B cell (primary cell): ENCODE measurements at regions of chr1 and their contacts with region 1.

Region 1: DNA sequence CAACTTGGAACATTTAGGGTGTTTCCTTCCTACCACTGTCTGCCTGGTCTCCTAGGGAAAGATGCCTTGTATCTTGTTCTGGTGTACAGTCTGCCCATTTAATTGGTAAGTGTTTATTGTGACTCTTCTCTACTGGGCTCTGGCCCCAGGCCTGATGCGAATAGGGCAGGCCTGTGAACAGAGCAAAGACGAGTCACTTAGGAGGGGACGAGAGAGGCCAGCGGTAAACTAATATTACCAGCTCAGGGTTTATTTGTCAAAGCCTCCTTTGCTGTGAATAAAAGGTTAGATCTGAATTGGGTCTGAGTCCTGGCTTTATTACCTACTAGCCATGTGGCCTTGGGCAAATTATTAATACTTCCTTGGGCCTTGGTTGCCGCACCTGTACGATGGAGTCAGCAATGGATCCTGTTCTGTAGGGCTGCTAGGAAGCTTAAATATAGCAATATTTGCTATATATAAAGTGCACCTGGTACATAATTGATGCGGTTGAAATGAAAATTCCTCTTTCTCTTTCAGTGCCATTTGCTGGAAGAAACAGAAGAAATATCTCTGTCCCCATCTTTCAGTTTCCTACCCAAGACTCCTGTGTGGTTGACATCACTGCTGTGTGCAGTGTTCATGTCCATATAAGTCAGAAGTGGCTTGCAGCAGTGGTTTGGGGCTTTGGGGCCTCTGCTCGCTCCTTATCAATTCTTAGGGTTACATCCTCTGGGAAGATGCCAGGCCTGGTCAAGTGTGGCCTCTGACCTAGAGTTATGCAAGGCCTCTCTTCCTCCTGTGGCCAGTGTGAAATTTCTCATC is 32.4 kb downstream of the MAPKAPK2 start:
- DNase-seq: peak; percentile 49
- ATAC-seq: no peak
- H3K4me3 ChIP-seq: no peak overlapping the region
- H3K4me3 Mint-ChIP-seq: peak overlapping the region; percentile 24
- H3K27ac ChIP-seq: peak overlapping the region; percentile 35 to 75
- H3K27ac Mint-ChIP-seq: peak overlapping the region; percentile 81
- H3K4me1 ChIP-seq: peaks cover 70 to 77% of the 10 kb centered on the region in 2 donors
- H3K4me1 Mint-ChIP-seq: peaks cover 81% of the 10 kb centered on the region
- H3K27me3 ChIP-seq: no peaks in the 10 kb centered on the region
- H3K27me3 Mint-ChIP-seq: no peaks in the 10 kb centered on the region
- CTCF ChIP-seq: no peak

Region 2: GRCh38 chr1:206658264-206658980 is 58.6 kb before region 1 on chr1:
- CTCF ChIA-PET with region 1: interaction called, 145 read pairs
- POLR2A ChIA-PET with region 1: no interaction called
- intact Hi-C with region 1: no loop called
- DNase-seq: peak; percentile 72
- ATAC-seq: peak; percentile 85
- H3K4me3 ChIP-seq: peak overlapping the region in 3 of 5 experiments; percentile 8 to 51 (median 12)
- H3K4me3 Mint-ChIP-seq: peak overlapping the region; percentile 49
- H3K27ac ChIP-seq: no peak overlapping the region
- H3K27ac Mint-ChIP-seq: peak overlapping the region; percentile 1
- H3K4me1 ChIP-seq: peaks cover 16 to 17% of the 10 kb centered on the region in 2 donors
- H3K4me1 Mint-ChIP-seq: peaks cover 21% of the 10 kb centered on the region
- H3K27me3 ChIP-seq: peaks cover 0 to 34% (median 11%) of the 10 kb centered on the region in 4 experiments
- H3K27me3 Mint-ChIP-seq: peaks cover 30% of the 10 kb centered on the region
- CTCF ChIP-seq: peak; percentile 96

Region 3: DNA sequence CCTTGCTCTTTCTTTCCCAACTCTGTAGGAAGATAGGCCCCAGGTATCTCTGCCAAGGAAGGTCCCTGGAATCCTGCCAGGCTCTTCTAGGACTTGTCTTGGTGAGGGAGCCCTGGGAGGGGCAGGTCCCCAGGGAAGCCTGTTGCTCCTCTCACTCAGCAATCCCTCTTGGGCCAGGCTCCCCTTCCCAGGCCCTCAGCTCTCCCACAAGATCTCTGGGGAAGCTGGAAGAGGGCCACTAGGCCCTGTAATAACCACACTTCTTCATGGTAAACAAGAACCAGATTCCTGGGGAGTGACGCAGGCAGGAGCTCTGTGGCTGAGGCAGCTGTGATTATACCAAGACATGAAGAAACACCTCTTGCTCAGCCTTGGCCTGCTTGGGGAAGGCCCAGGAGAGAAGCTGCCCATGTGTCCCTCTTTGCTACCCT is 42.3 kb before region 1 on chr1:
- CTCF ChIA-PET with region 1: interaction called, 4 read pairs
- POLR2A ChIA-PET with region 1: interaction called, 6 read pairs
- intact Hi-C with region 1: loop called (anchors 5 kb)
- DNase-seq: no peak
- ATAC-seq: no peak
- H3K4me3 ChIP-seq: no peak overlapping the region
- H3K4me3 Mint-ChIP-seq: no peak overlapping the region
- H3K27ac ChIP-seq: no peak overlapping the region
- H3K27ac Mint-ChIP-seq: peak overlapping the region; percentile 21
- H3K4me1 ChIP-seq: peaks cover 40 to 53% of the 10 kb centered on the region in 2 donors
- H3K4me1 Mint-ChIP-seq: peaks cover 31% of the 10 kb centered on the region
- H3K27me3 ChIP-seq: peaks cover 0 to 32% (median 6%) of the 10 kb centered on the region in 4 experiments
- H3K27me3 Mint-ChIP-seq: peaks cover 11% of the 10 kb centered on the region
- CTCF ChIP-seq: no peak

Region 4: GRCh38 chr1:206706298-206706791 is 10.7 kb before region 1 on chr1:
- CTCF ChIA-PET with region 1: interaction called, 7 read pairs
- POLR2A ChIA-PET with region 1: interaction called, 6 read pairs
- intact Hi-C with region 1: loop called (anchors 1 kb)
- DNase-seq: no peak
- ATAC-seq: no peak
- H3K4me3 ChIP-seq: no peak overlapping the region
- H3K4me3 Mint-ChIP-seq: peak overlapping the region; percentile 29
- H3K27ac ChIP-seq: no peak overlapping the region
- H3K27ac Mint-ChIP-seq: peak overlapping the region; percentile 57
- H3K4me1 ChIP-seq: peaks cover 79 to 80% of the 10 kb centered on the region in 2 donors
- H3K4me1 Mint-ChIP-seq: peaks cover 90% of the 10 kb centered on the region
- H3K27me3 ChIP-seq: no peaks in the 10 kb centered on the region
- H3K27me3 Mint-ChIP-seq: no peaks in the 10 kb centered on the region
- CTCF ChIP-seq: no peak